Caco-2 (cell line): ENCODE measurements at regions of chr11 and their contacts with region 1.

Region 1: GRCh38 chr11:64358907-64359711 is at the start of gene RPS6KA4:
- DNase-seq: peak; percentile 65 to 82
- H3K4me3 ChIP-seq: peak within 1 kb of the TSS; percentile 99
- H3K4me3 Mint-ChIP-seq: peak within 1 kb of the TSS; percentile 99
- H3K27ac Mint-ChIP-seq: peak within 1 kb of the TSS; percentile 86
- H3K4me1 ChIP-seq: peaks cover 46% of the 10 kb centered on the region
- H3K4me1 Mint-ChIP-seq: peaks cover 29% of the 10 kb centered on the region
- H3K27me3 ChIP-seq: no peaks in the 10 kb centered on the region
- H3K27me3 Mint-ChIP-seq: no peaks in the 10 kb centered on the region
- CTCF ChIP-seq: no peak
- total RNA-seq, gene RPS6KA4: 95.7 and 98.6 TPM in 2 replicates

Region 2: DNA sequence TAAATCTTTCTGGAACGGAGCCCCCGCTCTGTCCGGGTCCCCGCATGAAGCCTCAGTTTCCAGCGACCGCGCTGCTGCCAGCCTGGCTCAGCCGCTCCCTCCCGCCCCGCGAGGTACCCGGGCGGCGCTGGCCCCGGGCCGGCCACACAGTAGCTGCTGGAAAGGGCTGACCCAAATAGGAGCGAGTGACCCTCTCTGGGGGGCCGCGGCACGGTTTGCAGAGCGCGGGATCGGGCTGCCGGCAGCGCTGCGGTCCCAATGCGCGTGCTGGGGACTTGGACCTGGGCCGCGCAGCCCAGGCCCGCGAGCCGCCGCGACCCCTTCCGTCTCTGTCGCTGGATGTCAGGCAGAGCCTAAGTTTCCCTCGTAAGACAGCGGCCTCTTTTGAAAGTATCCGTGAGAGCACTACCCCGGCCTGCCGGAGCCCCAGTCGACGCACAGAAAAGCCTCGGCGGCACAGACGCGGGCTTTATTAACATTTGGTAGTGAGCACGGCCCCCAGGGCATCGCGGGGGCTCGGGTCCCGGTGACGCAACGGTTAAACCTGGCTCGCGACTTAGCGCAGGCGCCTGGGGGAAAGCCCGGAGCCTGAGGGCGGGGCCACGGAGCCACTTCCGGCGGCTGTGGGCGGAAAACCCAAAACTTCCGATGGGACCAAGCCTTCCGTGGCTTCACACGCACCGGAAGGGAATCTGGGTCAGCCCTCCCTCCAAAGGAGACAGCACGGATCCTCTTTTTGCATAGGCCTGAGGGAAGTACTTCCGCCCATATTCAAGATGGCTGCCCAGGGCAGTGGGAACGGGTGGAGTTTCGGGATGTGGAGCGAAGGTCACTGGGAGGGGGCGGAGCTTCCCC is 89.5 kb before region 1 on chr11:
- CTCF ChIA-PET with region 1: interaction called, 29 read pairs
- POLR2A ChIA-PET with region 1: no interaction called
- intact Hi-C with region 1: loop called (anchors 5 kb)
- DNase-seq: peak; percentile 99
- H3K4me3 ChIP-seq: peak overlapping the region; percentile 85
- H3K4me3 Mint-ChIP-seq: peak overlapping the region; percentile 89
- H3K27ac Mint-ChIP-seq: peak overlapping the region; percentile 95
- H3K4me1 ChIP-seq: peaks cover 21% of the 10 kb centered on the region
- H3K4me1 Mint-ChIP-seq: peaks cover 17% of the 10 kb centered on the region
- H3K27me3 ChIP-seq: no peaks in the 10 kb centered on the region
- H3K27me3 Mint-ChIP-seq: no peaks in the 10 kb centered on the region
- CTCF ChIP-seq: no peak

Region 3: GRCh38 chr11:64324692-64325469 is 34.2 kb before region 1 on chr11:
- CTCF ChIA-PET with region 1: interaction called, 11 read pairs
- POLR2A ChIA-PET with region 1: no interaction called
- intact Hi-C with region 1: no loop called
- DNase-seq: no peak
- H3K4me3 ChIP-seq: no peak overlapping the region
- H3K4me3 Mint-ChIP-seq: no peak overlapping the region
- H3K27ac Mint-ChIP-seq: peak overlapping the region; percentile 30
- H3K4me1 ChIP-seq: peaks cover 9% of the 10 kb centered on the region
- H3K4me1 Mint-ChIP-seq: peaks cover 11% of the 10 kb centered on the region
- H3K27me3 ChIP-seq: no peaks in the 10 kb centered on the region
- H3K27me3 Mint-ChIP-seq: no peaks in the 10 kb centered on the region
- CTCF ChIP-seq: no peak

Region 4: GRCh38 chr11:64341851-64342791 is 17.0 kb before region 1 on chr11:
- CTCF ChIA-PET with region 1: interaction called, 15 read pairs
- POLR2A ChIA-PET with region 1: no interaction called
- intact Hi-C with region 1: no loop called
- DNase-seq: no peak
- H3K4me3 ChIP-seq: no peak overlapping the region
- H3K4me3 Mint-ChIP-seq: no peak overlapping the region
- H3K27ac Mint-ChIP-seq: no peak overlapping the region
- H3K4me1 ChIP-seq: no peaks in the 10 kb centered on the region
- H3K4me1 Mint-ChIP-seq: peaks cover 2% of the 10 kb centered on the region
- H3K27me3 ChIP-seq: no peaks in the 10 kb centered on the region
- H3K27me3 Mint-ChIP-seq: no peaks in the 10 kb centered on the region
- CTCF ChIP-seq: no peak

Region 5: DNA sequence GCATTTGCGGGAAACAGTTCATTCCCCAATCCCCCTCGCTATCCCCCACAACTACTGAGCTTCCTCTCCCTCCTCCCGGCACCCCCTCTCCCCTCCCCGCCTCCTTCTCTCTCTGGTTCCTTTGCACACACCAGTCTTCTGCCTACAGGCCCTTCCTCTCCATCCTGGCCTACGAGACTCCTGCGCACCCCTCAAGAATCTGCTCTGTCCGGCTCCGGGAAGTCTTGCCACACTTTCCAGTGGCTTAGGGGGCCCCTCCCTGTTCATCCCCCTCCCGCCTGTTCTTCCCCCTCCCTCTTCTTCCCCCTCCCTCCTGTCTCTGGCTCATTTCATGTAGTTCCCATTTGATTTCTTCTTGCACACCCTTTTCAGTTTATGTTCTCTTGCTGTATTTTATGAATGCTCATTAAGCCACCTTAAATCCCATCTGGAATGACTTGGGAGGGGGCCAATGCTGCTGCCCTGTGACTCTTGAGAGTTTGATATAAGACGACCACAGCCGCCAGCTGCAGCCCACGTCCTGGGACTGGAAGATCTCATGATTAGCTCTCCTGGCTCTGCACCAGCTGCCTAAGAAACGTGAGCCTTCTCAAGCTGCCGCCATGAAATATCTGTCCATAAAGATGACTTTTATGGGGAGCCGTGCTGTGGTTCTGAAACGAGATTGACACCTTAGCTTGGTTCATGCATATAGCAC is 50.7 kb after region 1 on chr11:
- CTCF ChIA-PET with region 1: interaction called, 18 read pairs
- POLR2A ChIA-PET with region 1: no interaction called
- intact Hi-C with region 1: loop called (anchors 1 kb)
- DNase-seq: no peak
- H3K4me3 ChIP-seq: no peak overlapping the region
- H3K4me3 Mint-ChIP-seq: no peak overlapping the region
- H3K27ac Mint-ChIP-seq: peak overlapping the region; percentile 76
- H3K4me1 ChIP-seq: peaks cover 48% of the 10 kb centered on the region
- H3K4me1 Mint-ChIP-seq: peaks cover 37% of the 10 kb centered on the region
- H3K27me3 ChIP-seq: no peaks in the 10 kb centered on the region
- H3K27me3 Mint-ChIP-seq: no peaks in the 10 kb centered on the region
- CTCF ChIP-seq: no peak

Region 6: DNA sequence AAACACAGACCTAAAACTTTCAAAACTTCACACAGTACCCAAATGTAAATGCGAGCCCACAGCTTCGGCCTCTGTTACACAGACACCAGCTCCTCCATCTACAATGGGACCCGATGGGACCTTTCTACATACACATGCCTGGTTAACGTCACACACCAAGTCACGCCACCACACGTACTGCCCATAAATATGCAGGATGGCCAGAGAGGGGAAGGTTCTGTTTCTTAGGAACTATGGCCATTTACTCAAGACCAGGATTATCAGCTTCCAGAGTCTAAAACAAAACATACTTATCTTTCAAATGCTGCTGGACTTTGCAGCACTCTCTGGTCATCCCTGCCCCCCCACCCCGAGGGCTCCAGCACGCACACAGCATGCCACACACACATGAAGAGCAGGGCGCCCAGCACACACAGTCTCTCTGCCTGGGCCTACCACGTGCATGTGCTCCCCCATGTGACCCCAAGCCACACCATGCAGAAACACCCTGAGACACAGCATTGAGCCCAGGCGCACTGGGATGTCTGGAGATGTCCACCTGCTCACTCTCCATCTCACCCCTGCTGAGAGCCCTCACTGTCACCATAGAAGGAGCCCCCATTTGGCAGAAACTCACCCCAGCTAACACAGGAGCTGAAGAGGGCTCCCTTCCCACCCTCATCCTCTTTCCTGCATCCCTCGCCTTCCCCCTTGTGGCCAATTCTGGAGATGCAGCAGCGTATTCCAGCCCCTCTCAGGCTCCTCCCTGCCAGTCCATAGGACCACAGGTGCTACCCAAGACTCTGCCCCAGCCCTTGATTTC is 293.7 kb after region 1 on chr11:
- CTCF ChIA-PET with region 1: interaction called, 9 read pairs
- POLR2A ChIA-PET with region 1: no interaction called
- intact Hi-C with region 1: loop called (anchors 10 kb)
- DNase-seq: peak; percentile 86 to 93
- H3K4me3 ChIP-seq: no peak overlapping the region
- H3K4me3 Mint-ChIP-seq: no peak overlapping the region
- H3K27ac Mint-ChIP-seq: no peak overlapping the region
- H3K4me1 ChIP-seq: peaks cover 17% of the 10 kb centered on the region
- H3K4me1 Mint-ChIP-seq: peaks cover 15% of the 10 kb centered on the region
- H3K27me3 ChIP-seq: no peaks in the 10 kb centered on the region
- H3K27me3 Mint-ChIP-seq: no peaks in the 10 kb centered on the region
- CTCF ChIP-seq: peak; percentile 91 to 93